Right cardiac atrium (tissue), 5 donors: ENCODE measurements at regions of chr2 and their contacts with region 1.

Region 1: GRCh38 chr2:173027181-173028128 is 48.2 kb upstream of the MAP3K20 start:
- DNase-seq: peak; percentile 80 to 90 (median 81)
- ATAC-seq: peak; percentile 73 to 82
- H3K4me3 ChIP-seq: no peak overlapping the region
- H3K27ac ChIP-seq: peak overlapping the region; percentile 86
- H3K4me1 ChIP-seq: peaks cover 4% of the 10 kb centered on the region
- H3K27me3 ChIP-seq: no peaks in the 10 kb centered on the region

Region 2: GRCh38 chr2:173205375-173205774 is 177.9 kb after region 1 on chr2:
- intact Hi-C with region 1: loop called (anchors 2 to 5 kb)
- DNase-seq: peak; percentile 81 to 92 (median 84)
- ATAC-seq: peak; percentile 96 to 97
- H3K4me3 ChIP-seq: no peak overlapping the region
- H3K27ac ChIP-seq: no peak overlapping the region
- H3K4me1 ChIP-seq: peaks cover 2% of the 10 kb centered on the region
- H3K27me3 ChIP-seq: no peaks in the 10 kb centered on the region

Region 3: DNA sequence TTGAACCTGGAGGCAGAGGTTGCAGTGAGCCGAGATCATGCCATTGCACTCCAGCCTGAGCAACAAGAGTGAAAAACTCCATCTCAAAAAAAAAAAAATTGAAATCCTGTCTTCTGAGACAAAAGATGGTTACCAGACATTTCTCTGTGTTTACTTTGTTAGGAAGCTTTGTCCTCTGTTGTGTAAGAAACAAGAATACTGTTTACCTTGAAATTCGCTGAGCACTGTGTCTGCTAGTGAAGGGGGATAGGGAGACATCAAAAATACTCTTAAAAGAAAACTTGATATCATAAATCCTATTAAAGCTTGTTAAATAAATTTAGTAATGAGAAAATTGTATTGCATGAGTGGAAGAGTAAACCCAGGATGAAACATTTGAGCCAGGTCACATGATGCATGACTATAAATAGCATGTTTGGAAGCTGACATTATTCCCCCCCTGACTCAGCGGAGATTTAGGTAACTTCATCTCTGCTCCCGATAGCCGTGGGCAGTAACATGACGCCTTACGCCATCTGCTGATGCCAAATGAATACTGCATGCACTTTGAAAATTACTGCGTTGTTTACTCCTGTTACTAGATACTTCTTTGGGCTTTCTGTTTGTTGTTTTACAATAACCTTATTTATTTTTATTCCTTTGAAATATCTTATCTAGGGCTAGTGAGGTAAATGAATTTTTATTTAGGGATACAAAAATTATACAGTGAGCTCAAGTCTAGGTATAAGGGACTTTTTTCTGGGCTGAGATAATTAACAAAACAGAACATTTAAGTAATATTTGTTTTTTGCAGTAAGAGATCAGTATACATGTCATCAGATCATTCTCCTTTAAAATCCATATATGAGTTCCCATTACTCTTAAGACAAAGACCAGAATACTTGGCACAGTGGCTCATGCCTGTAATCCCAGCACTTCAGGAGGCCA is 183.1 kb after region 1 on chr2:
- intact Hi-C with region 1: loop called (anchors 2 to 5 kb)
- DNase-seq: peak in 2 of 3 donors; percentile 55 to 70
- ATAC-seq: peak; percentile 91 to 93
- H3K4me3 ChIP-seq: no peak overlapping the region
- H3K27ac ChIP-seq: no peak overlapping the region
- H3K4me1 ChIP-seq: no peaks in the 10 kb centered on the region
- H3K27me3 ChIP-seq: no peaks in the 10 kb centered on the region